Caco-2 (cell line): ENCODE measurements at regions of chr11 and their contacts with region 1.

Region 1: DNA sequence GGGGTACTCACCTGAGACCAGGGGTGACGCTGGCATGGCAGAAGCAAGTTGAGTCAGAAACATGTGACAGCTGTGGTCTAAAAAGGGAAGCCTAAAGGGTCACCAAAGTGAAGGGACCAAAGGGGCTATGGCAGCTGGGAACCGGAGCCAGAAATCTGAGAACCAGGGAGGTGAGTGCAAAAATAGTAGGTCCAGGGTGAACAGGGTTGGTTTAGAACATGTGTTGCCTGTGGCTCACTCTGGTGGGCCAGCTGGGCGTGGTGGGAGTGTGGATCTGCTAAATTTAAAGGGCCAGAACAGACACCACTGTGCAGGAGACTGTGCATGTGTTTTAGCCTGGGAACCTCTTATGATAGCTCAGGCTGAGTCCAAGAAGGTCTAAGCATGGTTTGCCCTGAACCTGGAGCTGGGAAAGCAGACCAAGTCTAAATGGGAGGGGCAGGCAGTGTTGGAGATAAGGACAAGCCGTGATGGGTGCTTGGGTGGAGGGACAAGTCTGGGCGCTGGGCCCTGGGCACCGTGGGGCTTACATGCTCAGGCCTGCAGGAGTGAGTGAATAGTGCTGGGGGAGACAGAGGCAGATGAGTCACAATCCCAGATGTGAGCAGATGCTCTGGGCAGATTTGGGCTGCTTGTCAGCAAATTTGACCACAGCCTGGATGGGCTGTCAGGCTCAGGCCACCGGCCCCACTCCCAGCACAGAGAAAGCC is 41.4 kb upstream of the ZBED5 start:
- DNase-seq: peak in 1 of 2 experiments; percentile 74
- H3K4me3 ChIP-seq: no peak overlapping the region
- H3K4me3 Mint-ChIP-seq: peak overlapping the region; percentile 55
- H3K27ac Mint-ChIP-seq: peak overlapping the region; percentile 86
- H3K4me1 ChIP-seq: peaks cover 39% of the 10 kb centered on the region
- H3K4me1 Mint-ChIP-seq: peaks cover 58% of the 10 kb centered on the region
- H3K27me3 ChIP-seq: no peaks in the 10 kb centered on the region
- H3K27me3 Mint-ChIP-seq: no peaks in the 10 kb centered on the region
- CTCF ChIP-seq: no peak

Region 2: GRCh38 chr11:10844356-10844755 is 54.9 kb before region 1 on chr11:
- CTCF ChIA-PET with region 1: no interaction called
- POLR2A ChIA-PET with region 1: no interaction called
- intact Hi-C with region 1: loop called (anchors 1 kb)
- DNase-seq: no peak
- H3K4me3 ChIP-seq: no peak overlapping the region
- H3K4me3 Mint-ChIP-seq: no peak overlapping the region
- H3K27ac Mint-ChIP-seq: no peak overlapping the region
- H3K4me1 ChIP-seq: peaks cover 29% of the 10 kb centered on the region
- H3K4me1 Mint-ChIP-seq: peaks cover 11% of the 10 kb centered on the region
- H3K27me3 ChIP-seq: no peaks in the 10 kb centered on the region
- H3K27me3 Mint-ChIP-seq: no peaks in the 10 kb centered on the region
- CTCF ChIP-seq: no peak

Region 3: DNA sequence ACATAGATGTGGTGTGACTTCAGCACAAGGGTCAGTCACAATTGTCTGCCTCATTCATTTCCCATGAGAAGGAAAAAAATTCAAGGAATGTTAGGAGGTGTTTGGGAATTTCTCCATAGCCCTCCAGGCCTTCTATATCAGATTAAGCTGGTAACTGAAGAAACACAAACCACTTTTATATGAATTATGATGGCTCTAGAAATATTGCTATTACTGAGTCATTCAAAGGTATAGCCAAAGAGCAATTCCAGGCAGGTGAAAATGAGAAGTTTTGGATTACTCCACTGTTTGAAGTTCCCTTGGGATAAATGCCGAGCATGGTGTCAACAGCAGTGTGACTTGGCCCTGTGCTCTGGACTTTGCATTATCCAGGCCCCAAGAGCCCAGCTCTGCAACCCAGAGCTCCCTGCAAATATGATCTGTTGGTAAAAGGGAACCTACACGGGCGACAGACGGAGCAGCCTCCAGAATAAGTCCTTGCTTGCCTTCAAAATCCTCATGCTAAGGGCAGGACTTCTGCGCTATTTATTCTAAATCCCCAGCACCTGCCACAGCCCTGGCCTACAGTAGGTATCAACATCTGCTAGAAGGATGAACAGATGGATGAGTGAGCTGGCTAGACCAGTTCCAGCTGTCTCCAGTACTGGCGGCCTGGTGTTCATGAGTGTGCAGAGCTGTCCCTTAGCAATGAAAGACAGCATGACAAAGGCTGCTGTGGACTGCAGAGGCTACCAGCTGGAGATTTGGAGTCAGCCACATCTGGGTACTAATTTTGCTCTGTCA is 26.1 kb after region 1 on chr11:
- CTCF ChIA-PET with region 1: interaction called, 5 read pairs
- POLR2A ChIA-PET with region 1: interaction called, 7 read pairs
- intact Hi-C with region 1: loop called (anchors 1 kb)
- DNase-seq: peak; percentile 39 to 60
- H3K4me3 ChIP-seq: no peak overlapping the region
- H3K4me3 Mint-ChIP-seq: no peak overlapping the region
- H3K27ac Mint-ChIP-seq: peak overlapping the region; percentile 35
- H3K4me1 ChIP-seq: peaks cover 35% of the 10 kb centered on the region
- H3K4me1 Mint-ChIP-seq: peaks cover 20% of the 10 kb centered on the region
- H3K27me3 ChIP-seq: no peaks in the 10 kb centered on the region
- H3K27me3 Mint-ChIP-seq: no peaks in the 10 kb centered on the region
- CTCF ChIP-seq: no peak